ENCODE measurements at regions of chr5 and their contacts with region 1.

Region 1: DNA sequence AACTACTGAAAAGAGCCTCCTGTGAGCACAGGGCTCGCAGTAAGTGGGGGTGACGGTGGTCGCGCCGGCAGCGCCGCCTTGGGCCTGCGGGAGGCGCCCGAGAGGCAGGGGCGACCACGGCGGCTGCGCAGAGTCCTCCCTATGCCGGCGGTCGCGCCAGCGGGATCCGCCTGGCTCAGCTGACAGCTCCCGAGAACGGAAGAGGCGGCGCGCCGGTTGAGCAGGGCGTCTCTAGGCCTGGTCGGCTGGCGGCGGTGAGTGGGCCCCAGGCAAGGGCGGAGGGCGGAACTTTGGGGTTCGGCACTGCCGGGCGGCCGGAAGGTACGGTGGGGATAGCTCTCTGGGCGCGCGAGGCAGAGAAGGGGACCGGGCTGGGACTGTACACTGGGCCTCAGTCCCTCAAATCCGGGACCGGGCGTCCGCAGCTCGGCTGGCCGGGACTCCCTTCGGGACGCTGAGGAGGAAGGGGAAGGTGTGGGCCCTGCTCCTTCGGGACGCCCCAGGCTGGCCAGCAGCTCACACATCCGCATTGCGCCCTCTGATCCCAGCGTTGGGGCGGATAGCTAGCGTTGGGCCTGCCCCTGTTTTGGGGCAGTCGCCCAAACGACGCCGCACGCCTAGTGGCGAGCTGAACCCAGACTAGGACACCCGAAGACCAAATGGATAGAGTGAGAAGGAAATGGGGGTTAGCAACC is at the start of gene RNF14:
- DNase-seq: peak; percentile 89 to 97
- H3K4me3 ChIP-seq: peak within 1 kb of the TSS; percentile 63 to 77 (median 70)
- H3K27ac ChIP-seq: peak within 1 kb of the TSS; percentile 74
- H3K4me1 ChIP-seq: peaks cover 0 to 6% (median 3%) of the 10 kb centered on the region in 4 experiments; a peak in 3 of 7 replicates
- H3K27me3 ChIP-seq: no peaks in the 10 kb centered on the region
- CTCF ChIP-seq: peak; percentile 87 to 90 (median 88)
- EP300 ChIP-seq: no peak; a peak in 1 of 3 replicates
- POLR2A ChIP-seq: peak in 1 of 2 experiments; percentile 52; a peak in 1 of 3 replicates
- RAD21 ChIP-seq: peak; percentile 19 to 42; a peak in 3 of 4 replicates
- total RNA-seq, gene RNF14: 19.6 and 20.2 TPM in 2 replicates

Region 2: DNA sequence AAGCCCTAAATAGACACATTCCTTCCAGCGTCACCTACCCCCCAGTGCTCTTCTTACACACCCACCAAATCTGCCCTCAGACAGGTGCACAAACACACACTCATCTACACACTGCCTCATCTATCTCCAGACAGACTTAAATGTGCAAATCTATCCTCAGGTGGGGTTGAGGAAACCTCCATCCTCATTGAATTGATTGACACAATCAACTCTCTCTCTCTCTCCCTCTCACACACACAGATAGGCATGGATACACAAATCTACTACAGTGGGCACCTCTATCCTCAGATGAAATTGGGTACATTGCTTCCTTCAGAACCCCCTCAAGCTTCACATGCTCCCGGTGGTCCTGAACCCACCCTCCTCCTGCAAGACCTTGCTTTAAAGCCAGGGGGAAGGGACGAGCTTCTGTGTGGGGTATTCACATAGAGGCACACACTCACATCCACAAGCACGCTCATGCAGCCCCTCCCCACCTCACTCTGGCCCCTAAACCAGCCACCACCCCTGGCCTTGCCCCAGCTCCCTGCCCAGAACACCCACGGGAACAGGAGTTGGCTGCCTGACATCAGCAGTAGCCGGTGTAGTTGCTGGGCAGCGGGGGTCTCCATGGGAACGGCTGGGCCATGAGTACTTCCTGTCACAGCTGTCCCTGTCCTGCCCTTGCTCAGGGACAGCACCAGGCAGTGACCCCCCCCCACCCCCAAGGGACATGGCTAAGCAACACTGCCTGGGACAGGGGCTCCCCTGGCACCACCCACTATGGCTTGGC is 113.6 kb before region 1 on chr5:
- CTCF ChIA-PET with region 1: no interaction called
- POLR2A ChIA-PET with region 1: no interaction called
- DNase-seq: no peak
- H3K4me3 ChIP-seq: no peak overlapping the region
- H3K27ac ChIP-seq: 0 out of 2 replicates have a peak overlapping the region, but pooled peaks have one; percentile 10
- H3K4me1 ChIP-seq: peaks cover 20 to 48% (median 37%) of the 10 kb centered on the region in 4 experiments
- H3K27me3 ChIP-seq: no peaks in the 10 kb centered on the region
- CTCF ChIP-seq: no peak
- EP300 ChIP-seq: no peak
- POLR2A ChIP-seq: no peak
- RAD21 ChIP-seq: no peak

Region 3: DNA sequence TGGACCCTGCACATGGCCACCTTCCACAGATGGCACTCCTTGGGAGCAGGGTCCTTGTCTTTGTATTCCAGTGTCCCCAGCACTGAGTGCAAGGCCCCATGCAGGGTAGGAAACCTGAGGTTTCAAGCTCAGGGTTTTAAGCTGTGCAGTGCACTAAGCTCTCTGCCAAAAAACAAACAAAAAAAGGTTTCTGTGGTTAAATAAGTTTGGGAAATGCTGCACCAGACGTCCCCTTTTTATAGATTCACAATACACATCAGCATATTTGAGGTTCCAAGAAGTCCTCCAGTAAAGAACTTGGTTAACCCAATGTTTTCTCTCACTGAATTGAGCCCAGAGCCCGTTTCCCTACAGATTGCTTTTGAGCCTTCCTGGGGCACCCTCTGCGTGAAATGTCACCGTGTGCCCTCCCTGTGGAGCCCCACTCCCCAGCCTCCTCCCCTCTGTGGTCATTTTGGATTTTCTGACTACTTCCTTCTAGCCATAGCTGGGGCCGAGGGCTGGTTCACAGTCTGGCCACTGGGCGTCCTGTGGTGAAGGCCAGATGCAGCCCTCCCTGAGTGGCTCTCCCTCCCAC is 28.3 kb before region 1 on chr5:
- CTCF ChIA-PET with region 1: interaction called, 16 read pairs
- POLR2A ChIA-PET with region 1: interaction called, 5 read pairs
- DNase-seq: no peak
- H3K4me3 ChIP-seq: no peak overlapping the region
- H3K27ac ChIP-seq: no peak overlapping the region
- H3K4me1 ChIP-seq: peaks cover 0 to 9% (median 7%) of the 10 kb centered on the region in 4 experiments; a peak in 5 of 7 replicates
- H3K27me3 ChIP-seq: no peaks in the 10 kb centered on the region; a peak in 1 of 7 replicates
- CTCF ChIP-seq: no peak
- EP300 ChIP-seq: no peak
- POLR2A ChIP-seq: no peak
- RAD21 ChIP-seq: no peak

Region 4: DNA sequence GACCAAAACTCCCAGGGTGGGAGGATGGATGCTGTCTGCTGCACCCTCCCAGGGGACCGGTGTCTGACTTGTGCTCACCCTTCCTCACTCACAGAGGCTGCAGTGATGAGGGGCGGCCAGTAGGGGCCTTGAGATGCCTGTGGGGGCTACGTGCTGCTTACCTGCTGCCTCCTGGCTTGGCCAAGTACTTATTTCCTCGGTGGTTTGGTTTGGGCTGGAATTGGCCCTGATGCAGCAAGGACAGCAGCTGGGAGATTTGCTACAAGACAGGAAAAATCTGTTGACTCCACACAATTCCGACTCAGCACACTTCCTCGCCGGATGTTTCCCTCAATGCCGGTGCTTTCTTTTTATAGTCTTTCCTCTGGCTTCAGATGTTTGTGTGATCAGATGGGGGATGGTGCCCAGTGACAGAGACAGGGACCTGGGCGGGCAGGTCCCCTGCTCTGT is 17.7 kb before region 1 on chr5:
- CTCF ChIA-PET with region 1: interaction called, 16 read pairs
- POLR2A ChIA-PET with region 1: interaction called, 4 read pairs
- DNase-seq: peak; percentile 50 to 82
- H3K4me3 ChIP-seq: no peak overlapping the region
- H3K27ac ChIP-seq: no peak overlapping the region
- H3K4me1 ChIP-seq: peaks cover 0 to 3% (median under 1%) of the 10 kb centered on the region in 4 experiments; a peak in 3 of 7 replicates
- H3K27me3 ChIP-seq: no peaks in the 10 kb centered on the region; a peak in 1 of 7 replicates
- CTCF ChIP-seq: peak; percentile 80 to 98 (median 93)
- EP300 ChIP-seq: no peak
- POLR2A ChIP-seq: no peak
- RAD21 ChIP-seq: peak; percentile 45 to 63

Region 5: GRCh38 chr5:141992349-141992963 is 23.4 kb after region 1 on chr5:
- CTCF ChIA-PET with region 1: interaction called, 40 read pairs
- POLR2A ChIA-PET with region 1: interaction called, 6 read pairs
- DNase-seq: peak in 1 of 2 experiments; percentile 79
- H3K4me3 ChIP-seq: no peak overlapping the region
- H3K27ac ChIP-seq: no peak overlapping the region
- H3K4me1 ChIP-seq: no peaks in the 10 kb centered on the region
- H3K27me3 ChIP-seq: no peaks in the 10 kb centered on the region
- CTCF ChIP-seq: peak in 2 of 3 experiments; percentile 49 to 69; a peak in 2 of 4 replicates
- EP300 ChIP-seq: no peak
- POLR2A ChIP-seq: no peak
- RAD21 ChIP-seq: peak; percentile 55 to 66

Measured in H1 (cell line).